ENCODE measurements at regions of chr12 and their contacts with region 1.

Region 1: DNA sequence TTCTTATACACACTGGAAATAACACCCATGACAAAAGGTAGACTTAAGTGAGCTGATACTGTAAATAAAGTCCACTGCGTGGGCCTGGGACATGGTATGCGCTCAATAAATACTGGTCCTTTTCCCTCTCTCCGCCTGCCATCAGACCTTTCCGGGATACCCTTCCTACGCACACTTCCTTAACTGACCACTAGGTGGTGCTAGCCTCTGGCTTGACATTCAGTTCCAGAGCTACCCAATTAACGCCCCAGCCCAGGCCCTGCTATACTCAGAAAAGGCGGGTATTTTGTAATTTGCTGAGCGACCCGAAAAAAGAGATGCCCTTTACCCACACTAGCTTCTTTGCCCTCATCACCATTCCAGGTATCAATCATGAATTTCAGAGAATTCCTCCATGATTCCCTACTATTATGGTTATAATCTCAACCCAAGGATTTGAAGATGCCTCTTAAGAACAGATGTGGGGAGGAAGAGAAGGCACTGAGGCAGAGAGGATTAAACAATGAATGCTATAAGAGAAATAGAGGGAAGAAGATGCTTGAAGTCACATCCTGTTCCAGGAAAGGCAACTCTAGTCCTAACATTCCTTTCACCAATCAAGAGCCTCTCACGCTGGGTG is 3.9 kb upstream of the LRP1 start:
- DNase-seq: peak; percentile 83
- H3K4me3 Mint-ChIP-seq: no peak overlapping the region
- H3K27ac Mint-ChIP-seq: no peak overlapping the region
- H3K4me1 Mint-ChIP-seq: peaks cover 11% of the 10 kb centered on the region
- H3K27me3 Mint-ChIP-seq: peaks cover 6% of the 10 kb centered on the region

Region 2: DNA sequence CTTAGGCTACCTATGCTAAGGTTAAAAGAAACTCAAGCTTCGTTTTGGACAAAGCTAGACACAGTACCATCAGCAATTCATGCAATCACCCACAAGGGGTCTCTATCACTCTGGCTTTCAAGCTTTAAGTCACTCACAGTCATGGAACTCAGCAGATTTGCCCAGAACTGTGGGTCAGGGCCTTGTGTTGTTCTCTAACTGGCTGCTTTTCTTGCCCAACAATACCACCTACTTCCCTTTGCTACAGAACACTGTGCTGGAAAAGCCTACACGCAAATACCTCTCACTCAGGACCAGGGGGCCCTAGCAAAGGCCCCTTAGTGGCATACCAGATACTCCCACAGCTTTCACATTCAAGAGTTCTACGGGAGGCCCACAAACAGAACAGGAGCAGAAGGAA is 54.8 kb before region 1 on chr12:
- CTCF ChIA-PET with region 1: interaction called, 25 read pairs
- POLR2A ChIA-PET with region 1: interaction called, 4 read pairs
- intact Hi-C with region 1: no loop called
- DNase-seq: peak; percentile 68
- H3K4me3 Mint-ChIP-seq: peak overlapping the region; percentile 17
- H3K27ac Mint-ChIP-seq: peak overlapping the region; percentile 91
- H3K4me1 Mint-ChIP-seq: peaks cover 63% of the 10 kb centered on the region
- H3K27me3 Mint-ChIP-seq: no peaks in the 10 kb centered on the region

Region 3: DNA sequence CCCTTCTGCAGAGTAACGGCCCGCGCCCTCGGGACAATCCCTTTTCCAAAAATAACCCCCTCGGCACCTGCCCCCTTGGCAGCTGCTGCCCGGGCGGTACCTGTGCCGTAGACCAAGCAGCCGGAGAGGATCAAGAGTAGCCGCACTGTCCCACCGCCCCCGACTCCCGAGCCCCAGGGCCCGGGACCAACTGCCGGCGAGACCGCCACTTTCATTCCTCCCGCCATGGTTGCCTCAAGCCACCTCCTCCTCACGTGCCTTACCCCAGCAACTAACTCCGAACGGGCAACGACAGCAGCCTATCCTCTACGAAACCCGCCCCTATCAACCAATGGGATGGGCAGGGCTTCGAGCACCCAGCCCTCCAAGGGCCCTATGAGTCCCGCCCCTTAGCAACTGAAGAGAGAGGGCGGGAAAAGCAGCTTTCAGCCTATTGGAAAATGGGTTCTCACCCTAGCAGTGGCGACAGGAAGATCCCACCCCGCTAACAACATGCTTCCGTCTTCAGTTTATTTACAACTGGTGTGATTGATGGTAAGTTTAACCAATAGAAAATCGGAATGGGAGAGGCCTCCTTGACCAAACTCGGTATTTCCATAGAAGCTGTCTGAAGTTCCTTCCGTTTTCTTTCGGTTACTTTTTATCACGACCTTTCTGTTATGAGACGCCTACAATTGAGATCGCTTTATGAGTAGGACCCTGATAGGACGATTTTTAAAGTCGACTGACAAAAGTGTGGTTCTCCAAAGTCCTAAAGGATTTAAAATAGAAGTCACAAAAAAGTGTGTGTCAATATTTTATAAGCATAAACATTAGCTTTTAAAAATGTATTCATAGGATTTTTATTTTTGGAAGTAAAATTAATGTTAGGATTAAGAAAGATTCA is 45.6 kb before region 1 on chr12 and contains the start of gene NEMP1:
- CTCF ChIA-PET with region 1: interaction called, 11 read pairs
- POLR2A ChIA-PET with region 1: no interaction called
- intact Hi-C with region 1: no loop called
- DNase-seq: peak; percentile 98
- H3K4me3 Mint-ChIP-seq: peak within 1 kb of the TSS; percentile 99
- H3K27ac Mint-ChIP-seq: peak within 1 kb of the TSS; percentile 97
- H3K4me1 Mint-ChIP-seq: peaks cover 36% of the 10 kb centered on the region
- H3K27me3 Mint-ChIP-seq: no peaks in the 10 kb centered on the region
- total RNA-seq, gene NEMP1: 70.6 to 73.5 TPM

Region 4: GRCh38 chr12:57175428-57176138 is 51.2 kb after region 1 on chr12:
- CTCF ChIA-PET with region 1: interaction called, 228 read pairs
- POLR2A ChIA-PET with region 1: no interaction called
- intact Hi-C with region 1: loop called (anchors 1 kb)
- DNase-seq: peak; percentile 72
- H3K4me3 Mint-ChIP-seq: no peak overlapping the region
- H3K27ac Mint-ChIP-seq: no peak overlapping the region
- H3K4me1 Mint-ChIP-seq: no peaks in the 10 kb centered on the region
- H3K27me3 Mint-ChIP-seq: no peaks in the 10 kb centered on the region

Region 5: GRCh38 chr12:57182921-57183790 is 58.8 kb after region 1 on chr12:
- CTCF ChIA-PET with region 1: interaction called, 228 read pairs
- POLR2A ChIA-PET with region 1: no interaction called
- intact Hi-C with region 1: loop called (anchors 1 kb)
- DNase-seq: peak; percentile 87
- H3K4me3 Mint-ChIP-seq: no peak overlapping the region
- H3K27ac Mint-ChIP-seq: no peak overlapping the region
- H3K4me1 Mint-ChIP-seq: no peaks in the 10 kb centered on the region
- H3K27me3 Mint-ChIP-seq: no peaks in the 10 kb centered on the region

Measured in activated CD4-positive, alpha-beta memory T cell treated with anti-CD3 and anti-CD28 coated beads for 36 hours (primary cell).